Testis (tissue), 5 donors: ENCODE measurements at regions of chr1 and their contacts with region 1.

Region 1: DNA sequence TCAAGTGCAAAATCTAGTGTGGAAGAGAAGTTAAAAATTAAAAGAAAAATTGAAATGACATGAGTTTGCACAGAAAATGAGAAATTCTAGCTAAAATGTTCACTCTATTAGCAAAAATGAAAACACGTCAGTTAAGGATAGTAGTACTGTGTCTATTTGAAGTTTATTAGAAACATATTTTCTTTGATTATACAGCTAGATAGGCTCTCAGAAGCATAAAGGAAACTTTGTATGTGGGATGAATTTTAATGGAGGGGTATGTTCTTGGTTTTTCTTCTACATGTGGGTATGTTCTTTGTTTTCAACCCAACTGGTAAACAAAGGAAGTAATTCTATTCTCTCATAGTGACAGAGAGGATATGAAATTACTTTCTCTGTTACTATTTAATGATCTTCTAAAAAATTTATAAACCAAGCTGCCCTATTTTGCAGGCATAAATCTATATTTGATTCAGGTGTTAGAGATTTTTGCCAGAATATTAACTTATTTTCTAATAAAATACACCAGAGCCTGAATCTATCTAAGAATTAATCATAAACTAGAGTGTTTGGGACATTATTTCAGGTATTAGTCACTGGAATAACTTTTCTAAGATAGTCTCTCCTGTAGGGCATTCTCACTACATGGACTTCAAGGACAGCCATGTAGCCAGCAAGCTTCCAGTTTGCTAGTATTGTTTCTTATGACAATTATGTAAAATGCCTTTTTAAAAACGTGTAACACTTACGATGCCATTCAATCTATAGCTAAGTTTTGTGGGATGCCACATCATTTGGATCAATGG is 15.8 kb downstream of the GPSM2 start:
- DNase-seq: no peak
- H3K4me3 ChIP-seq: no peak overlapping the region
- H3K27ac ChIP-seq: no peak overlapping the region
- H3K4me1 ChIP-seq: no peaks in the 10 kb centered on the region
- H3K27me3 ChIP-seq: no peaks in the 10 kb centered on the region
- CTCF ChIP-seq: no peak
- POLR2A ChIP-seq: no peak

Region 2: DNA sequence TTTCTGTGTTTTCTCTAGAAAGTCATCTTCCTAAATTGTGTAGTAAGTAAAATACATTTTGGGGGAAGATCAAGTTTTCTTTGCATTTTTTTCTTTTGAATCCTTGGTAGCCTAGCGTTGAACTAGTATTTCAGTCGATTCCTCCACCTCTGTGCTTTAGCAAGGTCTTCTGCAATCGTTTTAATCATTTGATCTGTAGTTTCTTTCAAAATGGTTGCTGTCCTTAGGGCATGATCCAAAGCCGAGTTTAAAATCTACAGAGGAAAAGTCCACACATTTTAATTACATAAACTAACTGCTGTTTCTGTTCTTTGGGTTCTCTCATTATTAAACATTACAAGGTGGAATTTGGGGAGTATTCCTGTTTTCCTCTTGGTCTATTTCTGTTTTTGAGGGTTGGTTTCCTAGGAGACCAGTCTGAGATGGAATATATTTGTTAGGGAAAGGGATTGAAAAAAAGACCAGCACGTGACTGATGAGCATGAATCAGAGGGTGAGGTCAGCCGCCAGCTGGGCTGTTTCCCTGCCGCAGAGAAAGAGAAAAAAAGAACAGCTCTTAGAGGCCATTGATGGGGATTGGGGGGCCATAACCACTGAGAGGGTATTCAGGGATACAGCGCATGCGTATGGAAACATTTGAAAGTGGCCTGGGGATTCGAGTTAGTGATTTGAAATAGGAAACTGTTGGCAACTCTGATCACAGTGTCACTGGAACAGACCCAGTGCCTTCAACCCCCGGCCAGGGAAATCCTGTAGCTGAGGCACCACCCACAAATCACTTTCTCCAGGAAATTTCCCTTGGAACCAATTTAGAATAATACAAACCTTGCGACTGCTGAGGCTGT is 76.3 kb before region 1 on chr1:
- intact Hi-C with region 1: no loop called
- DNase-seq: peak; percentile 68
- H3K4me3 ChIP-seq: no peak overlapping the region
- H3K27ac ChIP-seq: peak overlapping the region; percentile 21 to 78
- H3K4me1 ChIP-seq: peaks cover 13% of the 10 kb centered on the region
- H3K27me3 ChIP-seq: no peaks in the 10 kb centered on the region
- CTCF ChIP-seq: no peak
- POLR2A ChIP-seq: no peak

Region 3: GRCh38 chr1:108830119-108831008 is 62.2 kb before region 1 on chr1:
- intact Hi-C with region 1: loop called (anchors 5 kb)
- DNase-seq: no peak
- H3K4me3 ChIP-seq: no peak overlapping the region
- H3K27ac ChIP-seq: peak overlapping the region in 1 of 2 donors; percentile 23
- H3K4me1 ChIP-seq: peaks cover 7% of the 10 kb centered on the region
- H3K27me3 ChIP-seq: no peaks in the 10 kb centered on the region
- CTCF ChIP-seq: no peak
- POLR2A ChIP-seq: no peak